ENCODE measurements at regions of chr14 and their contacts with region 1.

Region 1: DNA sequence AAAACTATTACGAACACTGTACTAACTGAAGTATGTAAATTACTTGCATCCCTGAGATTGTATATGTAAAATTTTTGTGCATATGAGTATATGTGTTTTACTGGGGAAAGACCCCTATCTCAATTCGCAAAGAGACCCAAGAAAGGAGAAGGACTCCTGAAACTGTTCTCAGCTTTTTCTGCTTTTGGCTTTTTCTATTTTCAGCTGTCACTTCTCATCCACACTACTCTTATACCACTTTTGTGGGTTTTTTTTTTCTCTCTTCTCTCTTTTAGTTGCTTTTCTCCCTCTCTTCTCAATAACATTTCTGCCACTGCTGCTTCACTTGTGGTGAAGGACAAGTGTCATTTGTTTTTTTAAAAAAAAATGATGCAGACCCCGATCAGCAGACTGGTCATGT is 39.8 kb downstream of the NIN start:
- H3K4me3 ChIP-seq: no peak overlapping the region
- H3K27ac ChIP-seq: no peak overlapping the region
- H3K4me1 ChIP-seq: peaks cover 44% of the 10 kb centered on the region
- CTCF ChIP-seq: no peak

Region 2: DNA sequence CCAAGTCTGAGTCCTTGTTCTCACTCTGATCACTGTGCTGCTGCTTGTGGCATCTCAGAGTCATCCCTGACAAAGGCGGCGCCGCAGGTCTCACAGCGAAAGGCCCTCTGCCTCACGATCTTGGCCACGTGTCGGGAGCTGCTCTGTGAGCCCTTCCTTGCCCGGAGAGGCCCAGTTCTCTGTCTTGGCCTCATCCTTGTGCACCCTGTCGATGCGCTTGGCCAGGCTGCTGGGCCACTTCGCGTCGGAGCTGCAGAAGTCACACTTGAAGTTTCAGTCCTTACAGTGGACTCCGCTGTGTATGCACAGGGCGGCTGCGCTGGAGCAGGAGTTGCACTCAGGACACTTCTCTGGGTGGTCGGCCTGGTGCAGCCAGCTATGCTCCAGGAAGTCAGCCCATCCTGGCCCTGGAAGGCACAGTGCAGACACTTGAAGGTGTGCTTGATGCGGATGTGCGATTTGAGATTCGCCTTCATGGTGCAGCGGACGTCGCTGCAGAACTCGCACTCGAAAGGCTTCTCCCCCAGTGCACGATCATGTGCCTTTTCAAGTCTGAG is 86.7 kb before region 1 on chr14:
- CTCF ChIA-PET with region 1: no interaction called
- POLR2A ChIA-PET with region 1: no interaction called
- H3K4me3 ChIP-seq: no peak overlapping the region
- H3K27ac ChIP-seq: no peak overlapping the region
- H3K4me1 ChIP-seq: no peaks in the 10 kb centered on the region
- CTCF ChIP-seq: no peak

Region 3: GRCh38 chr14:50778721-50779483 is 12.3 kb before region 1 on chr14:
- CTCF ChIA-PET with region 1: interaction called, 12 read pairs
- POLR2A ChIA-PET with region 1: no interaction called
- H3K4me3 ChIP-seq: no peak overlapping the region
- H3K27ac ChIP-seq: no peak overlapping the region
- H3K4me1 ChIP-seq: peaks cover 16% of the 10 kb centered on the region; the same call in 1 of the 2 replicates
- CTCF ChIP-seq: no peak

Measured in HEK293 (cell line).